ENCODE measurements at regions of chr5 and their contacts with region 1.

Region 1: GRCh38 chr5:60352992-60353599 is 346.9 kb downstream of the DEPDC1B start:
- DNase-seq: no peak
- H3K4me3 ChIP-seq: no peak overlapping the region
- H3K27ac ChIP-seq: no peak overlapping the region
- H3K4me1 ChIP-seq: peaks cover 0 to 21% (median 14%) of the 10 kb centered on the region in 4 donors
- H3K27me3 ChIP-seq: no peaks in the 10 kb centered on the region
- CTCF ChIP-seq: no peak
- EP300 ChIP-seq: no peak
- POLR2A ChIP-seq: no peak

Region 2: DNA sequence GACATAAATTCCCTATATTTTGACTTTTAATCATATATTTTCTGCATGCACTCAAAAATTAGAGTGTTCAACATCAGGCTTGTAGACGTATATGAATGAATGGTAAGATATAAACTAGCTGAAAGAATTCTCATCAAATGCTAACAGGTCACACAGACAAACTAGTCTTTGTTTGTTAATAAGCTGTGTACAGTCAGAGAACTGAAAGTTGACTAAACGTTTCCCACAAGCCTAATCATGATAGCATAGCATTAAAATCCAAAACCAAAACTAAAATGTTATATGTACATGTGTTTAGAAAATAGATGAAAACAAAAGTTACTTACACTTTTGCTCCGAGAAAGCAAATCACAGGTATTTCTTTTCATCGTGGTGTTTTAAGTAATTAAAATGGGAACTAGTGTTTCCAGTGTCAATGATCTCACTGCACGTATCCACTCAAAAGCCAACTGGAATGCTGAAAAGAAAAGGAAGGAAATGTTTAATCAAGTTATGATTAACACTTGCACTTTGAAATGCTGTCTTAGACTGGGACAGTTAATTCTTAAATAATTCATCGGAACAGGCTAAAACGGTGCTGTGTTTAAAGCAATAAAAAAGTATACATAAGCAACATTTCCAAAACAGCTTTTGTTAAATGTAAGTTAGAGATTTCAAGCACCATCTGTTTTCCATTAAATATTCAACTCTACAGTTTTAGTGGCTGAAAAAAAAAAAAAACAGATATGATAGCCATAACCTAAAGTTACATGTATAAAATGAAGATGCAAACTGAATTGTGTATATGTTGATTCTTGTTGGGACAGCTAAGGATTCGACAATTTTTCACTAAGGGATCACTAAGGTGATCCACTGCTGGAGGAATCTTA is 167.6 kb before region 1 on chr5:
- intact Hi-C with region 1: loop called (anchors 5 kb)
- DNase-seq: no peak
- H3K4me3 ChIP-seq: no peak overlapping the region
- H3K27ac ChIP-seq: no peak overlapping the region
- H3K4me1 ChIP-seq: no peaks in the 10 kb centered on the region
- H3K27me3 ChIP-seq: no peaks in the 10 kb centered on the region
- CTCF ChIP-seq: no peak
- EP300 ChIP-seq: no peak
- POLR2A ChIP-seq: no peak